CD8-positive, alpha-beta T cell (primary cell): ENCODE measurements at regions of chr17 and their contacts with region 1.

Region 1: DNA sequence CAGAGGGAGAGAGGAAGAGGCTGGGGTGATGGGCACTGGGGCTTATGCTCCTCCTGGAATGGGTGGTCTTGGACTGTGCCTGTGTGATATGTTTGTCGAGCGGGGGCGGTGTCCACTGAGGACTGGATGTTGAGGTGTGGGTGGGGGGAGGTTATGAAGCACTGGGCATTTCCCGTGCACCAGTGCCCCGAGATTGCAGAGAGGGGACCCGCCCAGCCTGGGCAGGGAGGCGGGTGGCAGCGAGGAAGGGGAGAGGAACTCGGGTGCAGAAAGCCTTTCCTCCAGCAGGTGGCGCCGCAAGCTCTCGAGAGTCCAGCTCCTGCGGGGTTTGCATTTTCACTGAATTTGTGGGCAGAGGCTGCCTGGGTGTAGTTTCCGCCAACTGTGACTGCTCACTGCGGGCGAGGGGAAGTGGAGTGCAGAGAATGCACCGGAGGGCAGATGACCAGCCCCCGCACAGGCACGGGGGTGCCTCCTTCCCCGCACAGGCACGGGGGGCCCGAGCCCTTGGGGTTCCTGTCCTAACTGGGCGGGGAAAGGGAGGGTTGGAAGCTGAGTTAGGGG is 190.6 kb downstream of the SEC14L1 start:
- DNase-seq: peak; percentile 90 to 99 (median 96)
- ATAC-seq: peak; percentile 79
- H3K4me3 ChIP-seq: peak overlapping the region; percentile 10 to 42
- H3K4me3 Mint-ChIP-seq: peak overlapping the region; percentile 79
- H3K27ac ChIP-seq: peak overlapping the region; percentile 32 to 56
- H3K27ac Mint-ChIP-seq: peak overlapping the region; percentile 90
- H3K4me1 ChIP-seq: peaks cover 41% of the 10 kb centered on the region
- H3K4me1 Mint-ChIP-seq: peaks cover 46% of the 10 kb centered on the region
- H3K27me3 ChIP-seq: no peaks in the 10 kb centered on the region
- H3K27me3 Mint-ChIP-seq: no peaks in the 10 kb centered on the region
- CTCF ChIP-seq: peak; percentile 87

Region 2: GRCh38 chr17:76791053-76791980 is 540.1 kb before region 1 on chr17:
- CTCF ChIA-PET with region 1: no interaction called
- POLR2A ChIA-PET with region 1: no interaction called
- intact Hi-C with region 1: no loop called
- DNase-seq: peak in 7 of 9 experiments; percentile 17 to 68 (median 52)
- ATAC-seq: peak; percentile 84
- H3K4me3 ChIP-seq: no peak overlapping the region
- H3K4me3 Mint-ChIP-seq: peak overlapping the region; percentile 43
- H3K27ac ChIP-seq: peak overlapping the region in 1 of 2 experiments; percentile 17
- H3K27ac Mint-ChIP-seq: peak overlapping the region; percentile 74
- H3K4me1 ChIP-seq: peaks cover 11% of the 10 kb centered on the region
- H3K4me1 Mint-ChIP-seq: peaks cover 11% of the 10 kb centered on the region
- H3K27me3 ChIP-seq: no peaks in the 10 kb centered on the region
- H3K27me3 Mint-ChIP-seq: no peaks in the 10 kb centered on the region
- CTCF ChIP-seq: no peak

Region 3: GRCh38 chr17:77343031-77343800 is 11.8 kb after region 1 on chr17:
- CTCF ChIA-PET with region 1: interaction called, 10 read pairs
- POLR2A ChIA-PET with region 1: interaction called, 24 read pairs
- intact Hi-C with region 1: loop called in 1 of 2 experiments (anchors 1 kb)
- DNase-seq: peak in 4 of 9 experiments; percentile 9 to 48 (median 34)
- ATAC-seq: no peak
- H3K4me3 ChIP-seq: no peak overlapping the region
- H3K4me3 Mint-ChIP-seq: peak overlapping the region; percentile 65
- H3K27ac ChIP-seq: peak overlapping the region in 1 of 2 experiments; percentile 44
- H3K27ac Mint-ChIP-seq: peak overlapping the region; percentile 88
- H3K4me1 ChIP-seq: peaks cover 53% of the 10 kb centered on the region
- H3K4me1 Mint-ChIP-seq: peaks cover 60% of the 10 kb centered on the region
- H3K27me3 ChIP-seq: no peaks in the 10 kb centered on the region
- H3K27me3 Mint-ChIP-seq: no peaks in the 10 kb centered on the region
- CTCF ChIP-seq: no peak

Region 4: GRCh38 chr17:77372444-77373298 is 41.3 kb after region 1 on chr17:
- CTCF ChIA-PET with region 1: interaction called, 59 read pairs
- POLR2A ChIA-PET with region 1: interaction called, 37 read pairs
- intact Hi-C with region 1: loop called (anchors 1 kb)
- DNase-seq: peak; percentile 21 to 84 (median 61)
- ATAC-seq: peak; percentile 33
- H3K4me3 ChIP-seq: peak overlapping the region; percentile 68 to 99
- H3K4me3 Mint-ChIP-seq: peak overlapping the region; percentile 81
- H3K27ac ChIP-seq: peak overlapping the region; percentile 66 to 81
- H3K27ac Mint-ChIP-seq: peak overlapping the region; percentile 89
- H3K4me1 ChIP-seq: peaks cover 59% of the 10 kb centered on the region
- H3K4me1 Mint-ChIP-seq: peaks cover 56% of the 10 kb centered on the region
- H3K27me3 ChIP-seq: no peaks in the 10 kb centered on the region
- H3K27me3 Mint-ChIP-seq: no peaks in the 10 kb centered on the region
- CTCF ChIP-seq: no peak

Region 5: DNA sequence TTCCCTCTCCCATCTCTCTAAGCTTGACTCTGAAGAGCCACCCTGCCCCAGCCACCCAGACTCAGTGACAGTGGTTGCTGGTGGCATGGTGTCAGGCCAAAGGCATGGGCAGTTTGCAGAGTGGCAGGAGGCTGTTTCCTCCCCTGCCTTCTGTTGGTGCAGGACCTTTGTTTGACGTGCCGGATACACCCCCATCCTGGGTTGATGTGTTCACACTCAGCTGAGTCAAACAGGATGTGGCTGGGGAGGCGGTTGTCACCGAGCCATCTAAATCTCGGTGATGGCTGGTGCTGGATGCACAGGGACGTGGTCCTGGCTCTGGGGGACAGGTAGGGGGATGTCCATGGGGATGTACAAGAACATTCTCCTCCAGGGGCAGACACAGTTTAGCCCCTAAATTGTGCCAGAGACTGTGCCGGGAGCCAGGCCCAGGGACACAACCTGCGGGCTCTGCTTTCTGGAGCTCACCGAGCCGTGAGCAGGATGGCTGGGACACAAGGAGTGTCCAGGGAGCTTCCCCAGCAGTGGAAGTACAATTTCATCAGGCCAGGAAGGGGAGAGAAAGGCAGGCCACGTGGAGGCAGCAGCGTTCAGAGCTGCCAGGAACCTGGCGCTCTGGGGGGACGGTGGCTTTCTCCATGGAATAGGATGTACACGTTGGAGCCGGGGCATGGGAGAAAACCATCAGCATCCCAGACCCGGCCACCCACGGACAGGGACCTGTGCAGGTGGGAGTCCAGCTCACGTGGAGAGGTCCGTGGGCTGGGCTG is 73.6 kb after region 1 on chr17:
- CTCF ChIA-PET with region 1: interaction called, 51 read pairs
- POLR2A ChIA-PET with region 1: interaction called, 20 read pairs
- intact Hi-C with region 1: loop called (anchors 1 kb)
- DNase-seq: peak; percentile 62 to 94 (median 88)
- ATAC-seq: peak; percentile 69
- H3K4me3 ChIP-seq: peak overlapping the region; percentile 58 to 60
- H3K4me3 Mint-ChIP-seq: peak overlapping the region; percentile 93
- H3K27ac ChIP-seq: peak overlapping the region; percentile 65 to 76
- H3K27ac Mint-ChIP-seq: peak overlapping the region; percentile 99
- H3K4me1 ChIP-seq: peaks cover 96% of the 10 kb centered on the region
- H3K4me1 Mint-ChIP-seq: peaks cover 87% of the 10 kb centered on the region
- H3K27me3 ChIP-seq: no peaks in the 10 kb centered on the region
- H3K27me3 Mint-ChIP-seq: no peaks in the 10 kb centered on the region
- CTCF ChIP-seq: no peak

Region 6: GRCh38 chr17:77451245-77451893 is 120.0 kb after region 1 on chr17:
- CTCF ChIA-PET with region 1: interaction called, 8 read pairs
- POLR2A ChIA-PET with region 1: interaction called, 12 read pairs
- intact Hi-C with region 1: loop called in 1 of 2 experiments (anchors 1 kb)
- DNase-seq: peak; percentile 36 to 86 (median 73)
- ATAC-seq: peak; percentile 25
- H3K4me3 ChIP-seq: peak overlapping the region; percentile 93 to 99
- H3K4me3 Mint-ChIP-seq: peak overlapping the region; percentile 94
- H3K27ac ChIP-seq: peak overlapping the region; percentile 80 to 86
- H3K27ac Mint-ChIP-seq: peak overlapping the region; percentile 100
- H3K4me1 ChIP-seq: peaks cover 54% of the 10 kb centered on the region
- H3K4me1 Mint-ChIP-seq: peaks cover 50% of the 10 kb centered on the region
- H3K27me3 ChIP-seq: no peaks in the 10 kb centered on the region
- H3K27me3 Mint-ChIP-seq: no peaks in the 10 kb centered on the region
- CTCF ChIP-seq: no peak

Region 7: DNA sequence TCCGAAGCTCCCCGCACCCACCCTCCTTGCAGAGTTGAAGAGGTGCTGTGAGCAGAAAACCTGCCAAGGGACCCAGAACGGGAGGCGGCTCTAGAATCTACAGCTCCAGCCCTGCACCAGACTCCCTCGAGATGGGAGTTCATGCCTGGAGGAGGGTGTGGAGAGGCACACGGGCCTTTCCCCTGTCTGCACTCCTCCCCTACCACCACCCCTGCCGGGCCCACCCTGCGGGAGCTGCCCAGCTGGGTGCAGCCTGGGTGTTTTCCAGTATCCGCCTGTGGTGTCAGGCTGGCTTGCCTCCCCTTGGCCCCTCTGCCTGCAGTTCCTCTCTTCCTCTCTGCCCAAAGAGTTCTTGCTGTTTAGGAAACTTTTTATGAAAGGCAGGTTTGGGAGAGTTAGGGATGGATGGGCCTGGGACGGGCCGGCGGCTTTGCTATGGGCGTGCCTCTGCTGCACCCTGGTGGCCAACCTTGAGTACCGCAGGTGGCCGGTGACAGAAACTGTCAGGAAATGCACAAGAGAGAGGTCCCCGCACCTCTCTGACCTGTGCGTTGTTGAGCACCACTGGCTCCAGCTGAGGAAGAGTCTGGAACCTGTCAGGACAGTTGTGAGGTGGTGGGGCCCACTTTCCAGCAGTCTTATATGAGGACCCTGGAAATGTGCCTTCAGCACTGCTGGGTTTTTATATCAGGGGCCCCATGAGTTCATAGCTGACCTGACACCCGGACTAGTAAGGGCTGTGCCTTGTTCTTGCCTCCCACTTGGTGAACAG is 163.5 kb after region 1 on chr17:
- CTCF ChIA-PET with region 1: interaction called, 44 read pairs
- POLR2A ChIA-PET with region 1: interaction called, 11 read pairs
- intact Hi-C with region 1: loop called in 1 of 2 experiments (anchors 1 kb)
- DNase-seq: peak; percentile 52 to 89 (median 75)
- ATAC-seq: peak; percentile 75
- H3K4me3 ChIP-seq: no peak overlapping the region
- H3K4me3 Mint-ChIP-seq: no peak overlapping the region
- H3K27ac ChIP-seq: peak overlapping the region in 1 of 2 experiments; percentile 28
- H3K27ac Mint-ChIP-seq: peak overlapping the region; percentile 89
- H3K4me1 ChIP-seq: peaks cover 31% of the 10 kb centered on the region
- H3K4me1 Mint-ChIP-seq: peaks cover 25% of the 10 kb centered on the region
- H3K27me3 ChIP-seq: no peaks in the 10 kb centered on the region
- H3K27me3 Mint-ChIP-seq: no peaks in the 10 kb centered on the region
- CTCF ChIP-seq: peak; percentile 99